A549 (cell line): ENCODE measurements at regions of chrX and their contacts with region 1.

Region 1: GRCh38 chrX:71365876-71366673 is at the start of gene TAF1:
- DNase-seq: peak; percentile 97 to 98
- ATAC-seq: peak; percentile 96 to 97
- H3K4me3 ChIP-seq: peak within 1 kb of the TSS; percentile 96
- H3K27ac ChIP-seq: peak within 1 kb of the TSS; percentile 97
- H3K4me1 ChIP-seq: peaks cover 11% of the 10 kb centered on the region
- CTCF ChIP-seq: no peak
- EP300 ChIP-seq: no peak
- POLR2A ChIP-seq: peak; percentile 82; the same call in 1 of the 2 replicates
- RAD21 ChIP-seq: no peak
- polyA plus RNA-seq, gene TAF1: 29.7 and 31.3 TPM in 2 replicates

Region 2: DNA sequence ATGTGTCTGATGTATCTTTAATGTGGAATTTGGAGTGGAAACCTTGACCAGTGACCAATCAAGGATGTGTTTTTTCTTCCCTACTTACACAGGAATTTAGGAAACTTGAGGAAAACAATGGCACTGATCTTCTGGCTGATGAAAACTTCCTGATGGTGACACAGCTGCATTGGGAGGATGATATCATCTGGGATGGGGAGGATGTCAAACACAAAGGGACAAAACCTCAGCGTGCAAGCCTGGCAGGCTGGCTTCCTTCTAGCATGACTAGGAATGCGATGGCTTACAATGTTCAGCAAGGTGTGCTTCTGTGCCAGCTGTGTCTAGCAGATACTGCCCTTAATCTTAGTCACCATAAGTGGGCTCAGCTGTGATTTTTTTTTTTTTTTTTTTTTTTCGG is 12.7 kb after region 1 on chrX:
- CTCF ChIA-PET with region 1: no interaction called
- POLR2A ChIA-PET with region 1: interaction called, 11 read pairs
- DNase-seq: no peak
- ATAC-seq: no peak
- H3K4me3 ChIP-seq: no peak overlapping the region
- H3K27ac ChIP-seq: no peak overlapping the region
- H3K4me1 ChIP-seq: no peaks in the 10 kb centered on the region
- CTCF ChIP-seq: no peak
- EP300 ChIP-seq: no peak
- POLR2A ChIP-seq: no peak
- RAD21 ChIP-seq: no peak

Region 3: GRCh38 chrX:71458866-71459265 is 92.8 kb after region 1 on chrX:
- CTCF ChIA-PET with region 1: no interaction called
- POLR2A ChIA-PET with region 1: no interaction called
- DNase-seq: no peak
- ATAC-seq: no peak
- H3K4me3 ChIP-seq: no peak overlapping the region
- H3K27ac ChIP-seq: no peak overlapping the region
- H3K4me1 ChIP-seq: no peaks in the 10 kb centered on the region
- CTCF ChIP-seq: no peak
- EP300 ChIP-seq: no peak
- POLR2A ChIP-seq: no peak
- RAD21 ChIP-seq: no peak

Region 4: GRCh38 chrX:71492231-71493065 is 126.4 kb after region 1 on chrX:
- CTCF ChIA-PET with region 1: no interaction called
- POLR2A ChIA-PET with region 1: no interaction called
- DNase-seq: peak; percentile 50 to 53
- ATAC-seq: peak; percentile 87 to 95
- H3K4me3 ChIP-seq: peak overlapping the region; percentile 43
- H3K27ac ChIP-seq: peak overlapping the region; percentile 43 to 87; a peak in 5 of 6 replicates
- H3K4me1 ChIP-seq: 0 out of 3 replicates have a peak, but pooled peaks cover 3% of the 10 kb centered on the region
- CTCF ChIP-seq: no peak
- EP300 ChIP-seq: no peak
- POLR2A ChIP-seq: 0 out of 2 replicates have a peak, but pooled peaks have one; percentile 7
- RAD21 ChIP-seq: no peak